Activated CD4-positive, alpha-beta T cell treated with anti-CD3 and anti-CD28 coated beads for 36 hours (primary cell): ENCODE measurements at regions of chr20 and their contacts with region 1.

Region 1: GRCh38 chr20:34516247-34517113 is at the start of gene DYNLRB1:
- DNase-seq: peak; percentile 98
- ATAC-seq: peak; percentile 81
- H3K4me3 Mint-ChIP-seq: peak within 1 kb of the TSS; percentile 97
- H3K27ac Mint-ChIP-seq: peak within 1 kb of the TSS; percentile 98
- H3K4me1 Mint-ChIP-seq: peaks cover 35% of the 10 kb centered on the region
- H3K27me3 Mint-ChIP-seq: no peaks in the 10 kb centered on the region
- total RNA-seq, gene DYNLRB1: 83.5 to 122 TPM

Region 2: DNA sequence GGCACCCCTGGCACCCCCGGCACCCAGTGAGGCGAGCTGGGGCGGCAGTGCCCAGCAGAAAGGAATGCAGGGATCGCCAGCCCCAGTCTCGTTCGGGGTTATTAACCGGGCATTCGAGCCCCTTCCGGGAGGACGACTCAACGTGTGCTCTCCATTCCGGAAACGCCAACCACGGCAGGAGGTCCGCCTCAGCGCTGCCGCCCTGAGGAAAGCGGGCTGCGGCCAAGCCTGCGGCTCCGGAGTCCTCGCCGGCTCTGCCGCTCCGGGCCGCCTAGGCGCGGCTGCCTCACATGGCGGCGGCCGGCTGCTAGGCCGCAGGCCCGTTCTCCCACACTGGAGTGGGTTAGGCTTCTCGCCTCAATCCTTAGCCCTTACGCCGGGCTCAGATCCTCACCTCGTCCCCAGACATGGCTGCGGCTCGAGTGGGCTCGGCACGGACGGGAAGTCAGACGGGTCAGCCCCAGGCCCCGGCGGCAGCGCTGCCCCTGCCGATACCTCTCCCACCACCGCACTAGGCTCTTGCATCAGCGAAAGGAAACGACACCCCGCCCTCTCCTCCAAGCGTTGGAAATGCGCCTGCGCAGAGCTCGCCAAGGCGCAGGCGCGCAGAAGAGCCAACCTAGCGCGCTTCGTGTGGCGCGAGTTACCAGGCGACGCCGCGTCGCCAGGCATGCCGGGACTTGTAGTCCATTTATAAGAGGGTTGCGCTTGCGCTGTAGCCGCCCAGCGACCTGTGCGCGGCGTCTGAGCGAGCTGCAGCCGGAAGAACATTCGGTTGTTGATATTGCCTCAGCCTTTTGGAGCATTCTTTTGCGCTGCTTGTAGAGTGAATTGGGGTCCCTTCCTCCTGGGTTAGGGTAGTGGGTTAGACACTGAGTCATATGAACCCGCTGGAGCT is 404.5 kb before region 1 on chr20 and contains the start of gene EIF2S2:
- CTCF ChIA-PET with region 1: no interaction called
- POLR2A ChIA-PET with region 1: no interaction called
- intact Hi-C with region 1: loop called in 1 of 2 experiments (anchors 5 kb)
- DNase-seq: peak; percentile 97
- ATAC-seq: peak; percentile 88
- H3K4me3 Mint-ChIP-seq: peak within 1 kb of the TSS; percentile 86
- H3K27ac Mint-ChIP-seq: peak within 1 kb of the TSS; percentile 97
- H3K4me1 Mint-ChIP-seq: peaks cover 38% of the 10 kb centered on the region
- H3K27me3 Mint-ChIP-seq: no peaks in the 10 kb centered on the region
- total RNA-seq, gene EIF2S2: 179 to 187 TPM

Region 3: GRCh38 chr20:34363062-34363464 is 153.4 kb before region 1 on chr20 and contains the start of gene ITCH:
- CTCF ChIA-PET with region 1: no interaction called
- POLR2A ChIA-PET with region 1: interaction called, 6 read pairs
- intact Hi-C with region 1: loop called in 1 of 2 experiments (anchors 1 kb)
- DNase-seq: peak; percentile 97
- ATAC-seq: peak; percentile 99
- H3K4me3 Mint-ChIP-seq: peak within 1 kb of the TSS; percentile 91
- H3K27ac Mint-ChIP-seq: peak within 1 kb of the TSS; percentile 98
- H3K4me1 Mint-ChIP-seq: peaks cover 38% of the 10 kb centered on the region
- H3K27me3 Mint-ChIP-seq: no peaks in the 10 kb centered on the region
- total RNA-seq, gene ITCH: 41.4 to 43.5 TPM

Region 4: GRCh38 chr20:34558320-34559218 is 42.1 kb after region 1 on chr20 and contains the start of gene MAP1LC3A:
- CTCF ChIA-PET with region 1: no interaction called
- POLR2A ChIA-PET with region 1: interaction called, 4 read pairs
- intact Hi-C with region 1: loop called in 1 of 2 experiments (anchors 1 kb)
- DNase-seq: peak; percentile 96
- ATAC-seq: peak; percentile 87
- H3K4me3 Mint-ChIP-seq: peak within 1 kb of the TSS; percentile 79
- H3K27ac Mint-ChIP-seq: peak within 1 kb of the TSS; percentile 88
- H3K4me1 Mint-ChIP-seq: peaks cover 14% of the 10 kb centered on the region
- H3K27me3 Mint-ChIP-seq: no peaks in the 10 kb centered on the region
- total RNA-seq, gene MAP1LC3A: 2.5 to 2.7 TPM

Region 5: DNA sequence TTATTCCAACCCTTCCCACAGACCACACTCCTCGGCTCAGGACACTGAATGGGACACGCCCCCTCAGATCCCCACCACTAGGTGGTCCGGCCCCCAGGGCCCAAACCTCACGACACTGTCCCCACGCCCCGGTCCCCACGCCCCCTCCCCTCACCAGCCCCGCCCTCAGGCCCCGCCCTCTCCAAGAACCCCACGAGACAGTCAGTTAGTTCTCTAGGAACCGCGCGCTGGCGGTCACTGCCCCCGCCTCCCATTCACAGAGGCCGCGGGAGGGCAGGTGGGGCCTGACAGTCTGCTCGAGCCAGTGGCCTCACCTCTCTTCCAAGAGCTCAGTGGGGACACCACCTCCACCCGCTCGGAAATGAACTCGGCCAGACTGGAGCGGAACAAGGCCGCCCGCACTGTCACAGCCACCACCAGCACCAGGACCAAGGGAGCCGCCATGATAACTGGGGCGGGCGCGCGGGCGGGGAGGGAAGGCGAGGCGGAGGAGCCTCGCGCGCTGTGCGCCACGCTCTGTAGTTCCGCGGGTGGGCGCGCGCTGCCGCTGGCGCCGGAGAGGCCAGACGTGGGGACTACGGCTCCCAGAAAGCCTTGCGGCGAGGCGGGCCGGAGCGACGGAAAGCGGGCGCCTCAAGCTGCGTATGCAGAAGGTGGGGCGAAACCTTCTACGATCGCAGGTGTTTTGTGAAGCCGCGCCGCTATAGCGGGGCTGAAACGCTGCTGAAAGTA is 160.3 kb after region 1 on chr20 and contains the start of gene PIGU:
- CTCF ChIA-PET with region 1: no interaction called
- POLR2A ChIA-PET with region 1: no interaction called
- intact Hi-C with region 1: loop called (anchors 1 kb)
- DNase-seq: peak; percentile 98
- ATAC-seq: peak; percentile 97
- H3K4me3 Mint-ChIP-seq: peak within 1 kb of the TSS; percentile 97
- H3K27ac Mint-ChIP-seq: peak within 1 kb of the TSS; percentile 96
- H3K4me1 Mint-ChIP-seq: peaks cover 34% of the 10 kb centered on the region
- H3K27me3 Mint-ChIP-seq: no peaks in the 10 kb centered on the region
- total RNA-seq, gene PIGU: 21.1 to 28.2 TPM

Region 6: GRCh38 chr20:34825530-34826362 is 309.3 kb after region 1 on chr20 and contains the start of gene NCOA6:
- CTCF ChIA-PET with region 1: no interaction called
- POLR2A ChIA-PET with region 1: no interaction called
- intact Hi-C with region 1: loop called in 1 of 2 experiments (anchors 1 kb)
- DNase-seq: peak; percentile 95
- ATAC-seq: peak; percentile 67
- H3K4me3 Mint-ChIP-seq: peak within 1 kb of the TSS; percentile 86
- H3K27ac Mint-ChIP-seq: peak within 1 kb of the TSS; percentile 95
- H3K4me1 Mint-ChIP-seq: peaks cover 30% of the 10 kb centered on the region
- H3K27me3 Mint-ChIP-seq: no peaks in the 10 kb centered on the region
- total RNA-seq, gene NCOA6: 20.3 to 31.1 TPM